ENCODE measurements at regions of chr14 and their contacts with region 1.

Region 1: DNA sequence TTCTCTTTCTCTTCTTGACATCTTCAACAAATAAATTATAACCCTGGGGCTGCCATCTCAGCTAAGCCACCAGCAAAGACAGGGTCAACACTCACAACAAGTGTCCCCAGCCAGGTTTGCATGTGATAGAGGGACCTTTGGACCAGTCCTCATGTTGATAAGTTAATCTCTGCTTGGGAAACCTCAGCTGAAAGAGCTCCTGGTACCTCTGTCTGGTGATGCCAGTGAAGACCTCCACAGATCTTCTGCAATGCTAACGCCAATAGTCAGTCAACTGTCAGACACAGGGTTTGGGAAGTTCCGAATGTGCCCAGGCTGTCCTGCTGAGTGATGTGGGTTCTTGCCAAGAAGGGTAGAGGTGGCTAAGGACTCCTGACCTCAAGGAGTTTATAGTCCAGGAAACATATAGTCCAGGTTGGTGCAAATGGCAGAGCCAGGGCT is 179.8 kb upstream of the GZMB start:
- DNase-seq: no peak
- H3K4me3 ChIP-seq: no peak overlapping the region
- H3K27ac ChIP-seq: no peak overlapping the region
- H3K4me1 ChIP-seq: peaks cover 0 to 12% (median 4%) of the 10 kb centered on the region in 6 donors
- H3K27me3 ChIP-seq: peaks cover 0 to 1% (median 0%) of the 10 kb centered on the region in 7 donors
- CTCF ChIP-seq: no peak
- POLR2A ChIP-seq: no peak

Region 2: GRCh38 chr14:24775950-24776349 is 37.9 kb before region 1 on chr14:
- intact Hi-C with region 1: no loop called
- DNase-seq: peak; percentile 10
- H3K4me3 ChIP-seq: no peak overlapping the region
- H3K27ac ChIP-seq: no peak overlapping the region
- H3K4me1 ChIP-seq: no peaks in the 10 kb centered on the region
- H3K27me3 ChIP-seq: no peaks in the 10 kb centered on the region
- CTCF ChIP-seq: no peak
- POLR2A ChIP-seq: no peak

Region 3: DNA sequence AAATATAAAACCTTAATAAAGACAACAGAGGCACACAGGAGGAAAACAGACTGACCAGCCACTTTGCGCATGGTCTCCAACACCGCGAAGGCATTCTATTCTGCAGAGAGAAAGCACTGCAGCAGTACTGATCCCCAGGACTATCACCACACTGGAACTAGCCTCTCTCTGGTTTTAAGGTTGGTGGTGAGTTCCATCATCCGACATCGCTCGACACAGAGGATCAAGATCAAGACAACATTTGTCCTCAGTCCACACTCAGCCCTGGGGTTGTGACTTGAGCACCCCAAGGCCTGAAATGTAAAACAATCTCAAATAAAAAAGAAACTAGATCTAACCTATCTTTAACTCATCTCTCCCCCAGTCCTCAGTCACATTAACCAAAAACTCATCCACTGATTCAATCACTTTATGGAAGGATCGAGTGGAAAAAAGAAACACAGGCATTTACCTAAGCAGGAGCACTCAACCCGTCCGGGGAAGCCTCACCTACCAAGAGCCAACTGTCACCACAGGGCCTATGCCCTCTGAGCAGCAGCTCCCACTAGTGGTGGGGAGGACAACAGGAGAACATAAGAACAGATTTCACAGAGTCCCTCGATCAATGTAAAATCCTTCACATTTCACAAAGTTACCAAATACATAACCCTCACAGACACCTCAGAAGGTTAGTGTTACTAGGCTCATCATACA is 218.4 kb after region 1 on chr14:
- intact Hi-C with region 1: no loop called
- DNase-seq: no peak
- H3K4me3 ChIP-seq: no peak overlapping the region
- H3K27ac ChIP-seq: no peak overlapping the region
- H3K4me1 ChIP-seq: no peaks in the 10 kb centered on the region
- H3K27me3 ChIP-seq: no peaks in the 10 kb centered on the region
- CTCF ChIP-seq: no peak
- POLR2A ChIP-seq: no peak

Region 4: DNA sequence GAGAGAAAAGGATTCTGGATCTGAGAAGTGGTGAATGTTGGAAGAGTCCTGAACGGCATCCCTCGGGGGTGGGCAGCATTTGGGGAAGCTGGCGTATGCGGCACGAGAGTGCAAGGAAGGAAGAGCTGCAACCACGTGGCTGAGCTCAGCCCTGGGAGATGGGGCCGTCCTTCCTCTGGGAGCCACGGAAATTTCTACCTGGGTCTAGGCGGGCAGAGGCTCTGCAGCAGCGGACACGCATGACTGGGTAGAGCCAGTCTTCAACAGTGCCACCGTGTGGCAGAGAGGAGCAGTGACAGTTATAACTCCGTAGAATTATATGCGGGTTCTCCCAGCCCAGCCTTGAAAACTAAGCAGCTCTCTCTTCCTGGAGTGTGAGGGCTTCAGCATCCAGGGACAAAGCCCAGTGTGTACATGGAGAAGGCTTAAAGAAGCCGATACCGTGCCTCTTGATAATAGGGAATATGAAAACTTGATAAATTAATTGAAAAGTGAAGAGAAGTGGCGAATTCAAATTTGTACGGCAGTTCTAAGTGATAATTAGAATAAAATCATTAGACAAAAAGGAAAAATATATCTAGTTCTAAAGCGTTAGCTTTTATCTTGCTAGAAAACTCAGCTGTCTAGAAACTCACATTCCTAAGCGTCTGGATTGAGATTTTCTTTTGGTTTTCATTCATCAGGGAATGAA is 319.0 kb after region 1 on chr14:
- intact Hi-C with region 1: loop called (anchors 5 kb)
- DNase-seq: peak; percentile 83
- H3K4me3 ChIP-seq: no peak overlapping the region
- H3K27ac ChIP-seq: no peak overlapping the region
- H3K4me1 ChIP-seq: peaks cover 0 to 5% (median 2%) of the 10 kb centered on the region in 6 donors
- H3K27me3 ChIP-seq: peaks cover 0 to 62% (median 7%) of the 10 kb centered on the region in 7 donors
- CTCF ChIP-seq: peak; percentile 35 to 84 (median 68)
- POLR2A ChIP-seq: no peak